ENCODE measurements at regions of chr12 and their contacts with region 1.

Region 1: DNA sequence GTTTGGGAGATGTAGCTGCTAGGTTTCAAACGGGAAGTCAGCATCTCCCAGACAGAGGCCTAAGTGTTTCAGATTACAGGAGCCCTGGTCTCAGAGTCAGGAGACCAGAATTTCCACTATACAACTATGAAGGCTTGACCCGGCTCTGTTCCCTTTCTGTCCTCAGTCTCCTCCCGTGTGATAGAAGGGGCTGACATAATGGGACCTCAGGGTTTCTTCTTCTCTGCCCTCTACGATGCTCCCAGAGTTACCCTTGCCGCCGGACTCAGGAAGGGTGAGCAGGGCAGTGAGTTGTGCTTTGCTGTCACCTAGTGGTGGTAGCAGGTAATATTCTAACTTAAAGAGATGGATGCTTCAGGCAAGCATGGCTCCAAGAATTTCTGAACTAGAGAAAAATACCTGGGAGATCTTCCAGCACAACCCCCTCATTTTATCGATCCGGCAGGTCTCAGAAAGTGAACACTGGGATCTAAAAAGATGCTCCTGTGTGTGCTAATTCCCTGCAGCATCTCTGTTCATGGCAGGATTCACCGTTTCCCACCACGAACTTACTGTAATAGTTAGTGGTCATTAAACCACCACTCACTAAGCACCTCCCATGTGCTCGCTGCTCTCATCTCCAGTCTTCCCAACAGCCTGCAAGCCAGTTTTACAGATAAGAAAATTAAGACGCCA is 84.4 kb downstream of the VWF start:
- DNase-seq: peak; percentile 65
- H3K4me3 Mint-ChIP-seq: no peak overlapping the region
- H3K27ac Mint-ChIP-seq: no peak overlapping the region
- H3K4me1 Mint-ChIP-seq: peaks cover 10% of the 10 kb centered on the region
- H3K27me3 Mint-ChIP-seq: peaks cover 57% of the 10 kb centered on the region
- CTCF ChIP-seq: peak; percentile 80

Region 2: GRCh38 chr12:5745265-5745888 is 294.7 kb before region 1 on chr12:
- CTCF ChIA-PET with region 1: no interaction called
- intact Hi-C with region 1: loop called (anchors 5 kb)
- DNase-seq: peak; percentile 67
- H3K4me3 Mint-ChIP-seq: no peak overlapping the region
- H3K27ac Mint-ChIP-seq: no peak overlapping the region
- H3K4me1 Mint-ChIP-seq: no peaks in the 10 kb centered on the region
- H3K27me3 Mint-ChIP-seq: peaks cover 46% of the 10 kb centered on the region
- CTCF ChIP-seq: peak; percentile 67

Region 3: DNA sequence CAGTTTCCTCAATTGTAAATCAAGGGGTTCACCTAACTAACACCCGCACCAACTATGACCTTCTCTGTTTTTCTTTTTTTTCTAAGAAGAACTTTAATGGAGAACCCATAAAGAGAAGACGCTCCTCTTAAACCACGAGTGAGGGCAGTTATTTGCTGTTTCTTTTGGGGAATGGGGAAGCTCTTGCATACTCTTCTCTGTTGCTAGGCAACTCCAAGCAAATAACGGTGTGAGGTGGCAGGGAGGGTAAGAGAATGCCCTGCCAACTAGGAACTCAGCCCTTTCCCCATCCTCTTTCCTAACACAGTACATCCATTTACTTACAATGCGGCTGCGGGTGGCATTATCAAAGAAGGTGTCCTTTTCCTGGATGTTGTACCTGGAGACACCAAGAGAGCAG is 209.9 kb before region 1 on chr12:
- CTCF ChIA-PET with region 1: no interaction called
- intact Hi-C with region 1: no loop called
- DNase-seq: no peak
- H3K4me3 Mint-ChIP-seq: no peak overlapping the region
- H3K27ac Mint-ChIP-seq: no peak overlapping the region
- H3K4me1 Mint-ChIP-seq: no peaks in the 10 kb centered on the region
- H3K27me3 Mint-ChIP-seq: peaks cover 35% of the 10 kb centered on the region
- CTCF ChIP-seq: no peak

Region 4: GRCh38 chr12:5988659-5989116 is 51.3 kb before region 1 on chr12:
- CTCF ChIA-PET with region 1: interaction called, 88 read pairs
- intact Hi-C with region 1: loop called (anchors 1 kb)
- DNase-seq: peak; percentile 84
- H3K4me3 Mint-ChIP-seq: no peak overlapping the region
- H3K27ac Mint-ChIP-seq: no peak overlapping the region
- H3K4me1 Mint-ChIP-seq: peaks cover 8% of the 10 kb centered on the region
- H3K27me3 Mint-ChIP-seq: peaks cover 31% of the 10 kb centered on the region
- CTCF ChIP-seq: peak; percentile 84

Region 5: GRCh38 chr12:6020926-6021325 is 19.1 kb before region 1 on chr12:
- CTCF ChIA-PET with region 1: no interaction called
- intact Hi-C with region 1: no loop called
- DNase-seq: no peak
- H3K4me3 Mint-ChIP-seq: no peak overlapping the region
- H3K27ac Mint-ChIP-seq: no peak overlapping the region
- H3K4me1 Mint-ChIP-seq: peaks cover 6% of the 10 kb centered on the region
- H3K27me3 Mint-ChIP-seq: peaks cover 50% of the 10 kb centered on the region
- CTCF ChIP-seq: no peak

Region 6: GRCh38 chr12:6080154-6081045 is 40.4 kb after region 1 on chr12:
- CTCF ChIA-PET with region 1: no interaction called
- intact Hi-C with region 1: no loop called
- DNase-seq: no peak
- H3K4me3 Mint-ChIP-seq: no peak overlapping the region
- H3K27ac Mint-ChIP-seq: no peak overlapping the region
- H3K4me1 Mint-ChIP-seq: peaks cover 15% of the 10 kb centered on the region
- H3K27me3 Mint-ChIP-seq: peaks cover 11% of the 10 kb centered on the region
- CTCF ChIP-seq: no peak